PC-9 (cell line): ENCODE measurements at regions of chr3 and their contacts with region 1.

Region 1: GRCh38 chr3:12810013-12810780 is 13.7 kb downstream of the CAND2 start:
- DNase-seq: peak; percentile 73 to 96
- H3K4me3 ChIP-seq: peak overlapping the region; percentile 64
- H3K27ac ChIP-seq: no peak overlapping the region
- H3K4me1 ChIP-seq: no peaks in the 10 kb centered on the region
- H3K27me3 ChIP-seq: no peaks in the 10 kb centered on the region
- CTCF ChIP-seq: peak; percentile 94

Region 2: GRCh38 chr3:12613250-12613649 is 196.9 kb before region 1 on chr3:
- CTCF ChIA-PET with region 1: no interaction called
- POLR2A ChIA-PET with region 1: interaction called, 24 read pairs
- intact Hi-C with region 1: no loop called
- DNase-seq: no peak
- H3K4me3 ChIP-seq: no peak overlapping the region
- H3K27ac ChIP-seq: no peak overlapping the region
- H3K4me1 ChIP-seq: no peaks in the 10 kb centered on the region
- H3K27me3 ChIP-seq: no peaks in the 10 kb centered on the region
- CTCF ChIP-seq: no peak

Region 3: DNA sequence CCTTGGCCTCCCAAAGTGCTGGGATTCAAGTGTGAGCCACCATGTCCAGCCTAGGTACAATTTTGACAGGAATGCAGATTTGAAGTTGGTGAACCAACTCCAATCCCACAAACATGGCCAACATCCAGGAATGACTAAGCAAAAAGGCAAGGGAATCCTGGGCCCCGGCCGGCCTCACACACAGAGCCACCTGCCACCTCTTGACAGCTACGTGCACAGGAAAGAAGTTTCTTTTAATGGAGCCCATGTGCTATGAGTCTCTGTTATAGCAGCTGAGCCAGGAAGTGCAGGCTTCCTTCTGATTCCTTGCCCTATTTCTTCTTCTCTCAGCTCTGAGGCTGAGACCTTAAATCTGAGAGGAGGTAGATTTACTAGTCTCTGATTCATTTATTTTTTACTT is 60.0 kb before region 1 on chr3:
- CTCF ChIA-PET with region 1: interaction called, 4 read pairs
- POLR2A ChIA-PET with region 1: interaction called, 6 read pairs
- intact Hi-C with region 1: loop called (anchors 5 kb)
- DNase-seq: peak; percentile 65 to 74
- H3K4me3 ChIP-seq: no peak overlapping the region
- H3K27ac ChIP-seq: peak overlapping the region; percentile 93
- H3K4me1 ChIP-seq: peaks cover 58% of the 10 kb centered on the region
- H3K27me3 ChIP-seq: no peaks in the 10 kb centered on the region
- CTCF ChIP-seq: no peak

Region 4: GRCh38 chr3:12853191-12853741 is 43.1 kb after region 1 on chr3:
- CTCF ChIA-PET with region 1: no interaction called
- POLR2A ChIA-PET with region 1: no interaction called
- intact Hi-C with region 1: no loop called
- DNase-seq: peak; percentile 55 to 88
- H3K4me3 ChIP-seq: no peak overlapping the region
- H3K27ac ChIP-seq: no peak overlapping the region
- H3K4me1 ChIP-seq: peaks cover 22% of the 10 kb centered on the region
- H3K27me3 ChIP-seq: no peaks in the 10 kb centered on the region; the same call in 1 of the 2 replicates
- CTCF ChIP-seq: no peak